ENCODE measurements at regions of chr2 and their contacts with region 1.

Region 1: GRCh38 chr2:235945608-235946140 is 222.5 kb downstream of the GBX2 start:
- DNase-seq: no peak
- H3K4me3 ChIP-seq: no peak overlapping the region
- H3K27ac ChIP-seq: no peak overlapping the region
- H3K4me1 ChIP-seq: peaks cover 3% of the 10 kb centered on the region
- H3K27me3 ChIP-seq: no peaks in the 10 kb centered on the region
- CTCF ChIP-seq: no peak
- POLR2A ChIP-seq: no peak

Region 2: GRCh38 chr2:235968616-235969324 is 23.1 kb after region 1 on chr2:
- CTCF ChIA-PET with region 1: no interaction called
- POLR2A ChIA-PET with region 1: interaction called, 11 read pairs
- dilution Hi-C with region 1: no loop called
- intact Hi-C with region 1: no loop called
- DNase-seq: no peak
- H3K4me3 ChIP-seq: no peak overlapping the region
- H3K27ac ChIP-seq: no peak overlapping the region
- H3K4me1 ChIP-seq: no peaks in the 10 kb centered on the region
- H3K27me3 ChIP-seq: no peaks in the 10 kb centered on the region
- CTCF ChIP-seq: no peak
- POLR2A ChIP-seq: no peak

Region 3: GRCh38 chr2:236008006-236008405 is 62.3 kb after region 1 on chr2:
- CTCF ChIA-PET with region 1: no interaction called
- POLR2A ChIA-PET with region 1: no interaction called
- dilution Hi-C with region 1: no loop called
- intact Hi-C with region 1: no loop called
- DNase-seq: no peak
- H3K4me3 ChIP-seq: no peak overlapping the region
- H3K27ac ChIP-seq: no peak overlapping the region
- H3K4me1 ChIP-seq: no peaks in the 10 kb centered on the region
- H3K27me3 ChIP-seq: no peaks in the 10 kb centered on the region
- CTCF ChIP-seq: no peak
- POLR2A ChIP-seq: no peak